Testis (tissue), 5 donors: ENCODE measurements at regions of chr18 and their contacts with region 1.

Region 1: DNA sequence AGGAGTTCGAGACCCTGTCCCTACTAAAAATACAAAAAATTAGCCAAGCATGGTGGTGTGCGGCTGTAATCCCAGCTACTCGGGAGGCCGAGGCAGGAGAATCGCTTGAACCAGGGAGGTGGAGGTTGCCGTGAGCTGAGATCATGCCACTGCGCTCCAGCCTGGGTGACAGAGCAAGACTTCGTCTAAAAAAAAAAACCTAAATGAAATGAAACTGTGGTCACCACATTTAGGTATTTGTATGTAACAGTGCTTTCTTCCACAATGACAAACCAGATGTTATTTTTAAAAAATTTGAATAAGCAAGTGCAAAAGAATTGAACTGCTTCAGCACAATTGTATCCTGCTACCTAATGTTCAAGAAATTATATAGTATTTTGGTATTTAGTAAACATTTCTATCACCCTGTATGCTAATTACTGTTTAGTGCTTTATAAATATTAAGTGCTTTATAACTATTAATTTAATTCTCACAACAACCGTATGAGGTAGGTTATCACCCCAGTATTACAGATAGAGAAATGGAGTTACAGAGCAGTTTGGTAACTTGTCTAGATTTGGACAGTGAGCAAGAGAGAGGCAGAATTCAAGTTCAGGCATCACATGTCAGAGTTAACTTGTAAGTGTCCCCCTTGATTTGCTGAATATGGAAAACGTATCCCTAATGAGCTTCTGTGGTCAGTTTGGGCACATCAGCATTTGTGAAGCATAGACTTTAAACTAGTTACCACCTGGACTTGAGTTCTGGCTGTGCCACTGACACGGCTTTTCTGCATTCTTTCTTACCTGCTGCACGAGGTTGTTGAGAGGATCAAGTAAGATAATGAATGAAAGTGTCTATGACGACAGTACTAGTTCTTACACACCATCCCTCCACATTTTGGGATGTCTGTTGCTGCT is 14.4 kb downstream of the PHLPP1 start:
- DNase-seq: no peak
- H3K4me3 ChIP-seq: no peak overlapping the region
- H3K27ac ChIP-seq: no peak overlapping the region
- H3K4me1 ChIP-seq: no peaks in the 10 kb centered on the region
- H3K27me3 ChIP-seq: no peaks in the 10 kb centered on the region
- CTCF ChIP-seq: no peak
- POLR2A ChIP-seq: no peak

Region 2: GRCh38 chr18:62767321-62767720 is 37.6 kb after region 1 on chr18:
- intact Hi-C with region 1: no loop called
- DNase-seq: no peak
- H3K4me3 ChIP-seq: no peak overlapping the region
- H3K27ac ChIP-seq: no peak overlapping the region
- H3K4me1 ChIP-seq: peaks cover 14% of the 10 kb centered on the region
- H3K27me3 ChIP-seq: no peaks in the 10 kb centered on the region
- CTCF ChIP-seq: no peak
- POLR2A ChIP-seq: no peak

Region 3: GRCh38 chr18:62784966-62785413 is 55.3 kb after region 1 on chr18:
- intact Hi-C with region 1: loop called (anchors 10 kb)
- DNase-seq: peak; percentile 90
- H3K4me3 ChIP-seq: no peak overlapping the region
- H3K27ac ChIP-seq: peak overlapping the region; percentile 42 to 69
- H3K4me1 ChIP-seq: peaks cover 26% of the 10 kb centered on the region
- H3K27me3 ChIP-seq: no peaks in the 10 kb centered on the region
- CTCF ChIP-seq: no peak
- POLR2A ChIP-seq: no peak

Region 4: DNA sequence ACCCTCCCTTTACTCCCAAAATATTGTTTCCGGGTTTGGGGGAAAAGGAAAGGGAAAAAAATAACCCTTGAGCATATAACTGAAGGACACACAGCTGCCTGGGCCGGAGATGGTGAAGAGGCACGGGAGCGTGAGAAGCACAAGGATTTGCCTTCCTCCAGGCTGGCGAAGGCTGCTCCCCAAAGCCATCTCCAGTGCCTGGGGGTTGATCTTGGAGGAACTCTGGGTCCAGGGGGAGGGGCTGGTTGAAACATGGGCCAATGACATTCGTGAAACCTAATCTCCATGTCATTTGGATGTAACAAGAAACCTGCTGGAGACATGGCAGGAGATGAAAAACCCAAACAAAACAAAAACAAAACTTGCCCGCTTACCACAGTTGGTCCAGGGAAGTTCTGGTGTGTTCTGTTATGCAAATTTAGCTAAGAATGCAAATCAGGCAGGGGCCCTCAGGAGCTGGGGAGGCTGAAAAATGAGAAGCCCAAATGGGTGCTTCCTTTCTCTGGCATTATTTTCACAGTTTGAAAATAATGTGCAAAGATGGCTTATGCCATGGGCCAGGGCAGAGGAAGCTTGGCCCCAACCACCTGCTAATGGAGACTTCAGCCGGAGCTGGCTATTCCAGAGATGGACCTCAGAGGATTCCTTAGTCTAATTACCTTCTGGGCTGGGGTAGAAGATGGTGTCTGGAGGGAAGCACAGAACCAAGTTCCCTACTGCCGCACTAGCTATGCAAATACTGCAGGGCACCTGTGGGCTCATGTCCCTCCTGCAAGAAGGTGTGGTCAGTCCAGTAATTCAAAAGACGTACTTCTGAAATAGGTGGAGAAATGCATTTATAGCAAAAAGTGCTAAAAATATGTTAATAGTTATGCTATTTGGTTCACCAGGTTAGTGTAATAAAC is 409.0 kb after region 1 on chr18:
- intact Hi-C with region 1: no loop called
- DNase-seq: no peak
- H3K4me3 ChIP-seq: no peak overlapping the region
- H3K27ac ChIP-seq: no peak overlapping the region
- H3K4me1 ChIP-seq: peaks cover 9% of the 10 kb centered on the region
- H3K27me3 ChIP-seq: no peaks in the 10 kb centered on the region
- CTCF ChIP-seq: no peak
- POLR2A ChIP-seq: no peak